GM10248 (cell line): ENCODE measurements at regions of chr2 and their contacts with region 1.

Region 1: DNA sequence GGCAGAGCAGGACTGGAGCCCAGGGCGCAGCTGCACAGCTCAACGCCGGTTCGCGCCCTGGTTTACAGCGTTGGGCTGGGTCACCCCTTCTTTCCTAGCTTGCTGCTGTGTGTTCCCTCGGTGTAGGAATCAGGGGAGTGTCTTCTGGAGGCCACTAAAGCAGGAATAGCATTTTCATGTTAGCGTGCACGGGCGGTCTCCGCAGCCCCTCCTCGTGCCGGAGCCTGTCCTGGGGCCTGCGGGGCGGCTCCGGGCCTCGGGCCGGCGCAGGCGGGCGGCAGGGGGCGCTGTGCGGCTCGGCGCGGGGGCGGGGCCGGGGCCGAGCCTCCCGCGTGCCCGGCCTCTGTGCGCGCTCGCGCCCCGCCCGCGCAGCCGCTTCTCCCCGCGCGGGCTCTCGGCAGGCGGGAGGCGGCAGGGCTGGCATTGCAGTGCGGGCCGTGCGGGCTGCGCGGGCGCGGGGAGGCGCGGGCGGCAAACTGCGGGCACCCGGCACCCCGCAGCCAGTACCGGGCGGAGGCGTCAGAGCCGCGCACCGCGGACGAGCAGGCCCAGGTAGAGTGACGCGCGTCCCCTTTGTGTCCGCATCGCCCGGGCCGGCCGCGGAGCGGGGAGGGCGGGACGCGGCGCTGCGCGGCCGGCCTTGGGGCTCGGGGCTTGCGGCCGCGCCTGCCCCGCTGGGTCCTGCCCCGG is at the start of gene RNF144A:
- DNase-seq: peak; percentile 88
- CTCF ChIP-seq: peak; percentile 73

Region 2: DNA sequence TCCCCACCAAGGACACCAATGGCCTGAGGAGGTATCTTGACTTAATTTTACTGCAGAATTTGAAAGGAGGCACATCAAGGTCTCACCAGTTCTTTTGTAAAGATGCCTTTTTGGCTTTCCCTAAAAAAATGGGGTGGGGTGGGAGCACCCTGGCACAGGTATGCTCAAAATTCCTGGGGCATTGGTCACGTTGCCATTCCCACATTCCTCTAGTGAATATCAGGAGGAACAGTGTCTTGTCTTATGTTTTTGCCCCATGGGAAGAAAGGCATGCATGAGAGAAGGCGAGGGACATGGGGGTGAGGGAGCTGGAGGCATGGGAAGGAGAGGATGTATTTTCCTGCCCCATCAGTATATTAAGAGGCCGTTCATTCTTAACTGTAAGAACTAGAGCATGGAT is 326.8 kb before region 1 on chr2:
- CTCF ChIA-PET with region 1: no interaction called
- POLR2A ChIA-PET with region 1: no interaction called
- DNase-seq: no peak
- CTCF ChIP-seq: no peak

Region 3: GRCh38 chr2:6854416-6854815 is 62.8 kb before region 1 on chr2:
- CTCF ChIA-PET with region 1: no interaction called
- POLR2A ChIA-PET with region 1: no interaction called
- DNase-seq: no peak
- CTCF ChIP-seq: no peak

Region 4: DNA sequence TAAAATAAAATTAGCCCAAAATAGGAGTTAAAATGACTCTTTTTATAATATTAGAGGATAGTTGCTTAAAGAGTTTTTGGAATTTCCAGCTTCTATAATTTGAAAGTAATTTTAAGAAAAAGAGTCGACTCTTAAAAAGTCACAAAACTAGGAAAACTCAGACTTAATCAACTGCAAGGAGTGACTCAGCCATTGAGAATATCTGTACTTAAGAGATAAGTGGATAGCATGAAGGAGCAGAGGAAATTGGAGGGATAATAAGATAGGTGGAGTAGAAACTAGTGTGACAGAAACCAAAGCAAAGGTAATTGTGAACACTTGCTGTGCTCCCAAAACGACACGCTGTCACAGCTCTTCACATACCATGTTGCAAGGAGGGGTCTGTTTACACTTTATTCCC is 31.2 kb before region 1 on chr2:
- CTCF ChIA-PET with region 1: no interaction called
- POLR2A ChIA-PET with region 1: no interaction called
- DNase-seq: no peak
- CTCF ChIP-seq: no peak

Region 5: GRCh38 chr2:6896930-6897759 is 20.1 kb before region 1 on chr2:
- CTCF ChIA-PET with region 1: interaction called, 123 read pairs
- POLR2A ChIA-PET with region 1: no interaction called
- DNase-seq: peak; percentile 31
- CTCF ChIP-seq: peak; percentile 65

Region 6: GRCh38 chr2:6929196-6929819 is 12.1 kb after region 1 on chr2:
- CTCF ChIA-PET with region 1: interaction called, 17 read pairs
- POLR2A ChIA-PET with region 1: no interaction called
- DNase-seq: no peak
- CTCF ChIP-seq: no peak

Region 7: GRCh38 chr2:6945087-6945813 is 28.0 kb after region 1 on chr2:
- CTCF ChIA-PET with region 1: interaction called, 12 read pairs
- POLR2A ChIA-PET with region 1: no interaction called
- DNase-seq: peak; percentile 66
- CTCF ChIP-seq: no peak

Region 8: GRCh38 chr2:6999211-6999877 is 82.1 kb after region 1 on chr2:
- CTCF ChIA-PET with region 1: interaction called, 10 read pairs
- POLR2A ChIA-PET with region 1: no interaction called
- DNase-seq: peak; percentile 60
- CTCF ChIP-seq: no peak

Region 9: GRCh38 chr2:7071916-7072556 is 154.8 kb after region 1 on chr2:
- CTCF ChIA-PET with region 1: no interaction called
- POLR2A ChIA-PET with region 1: no interaction called
- DNase-seq: no peak
- CTCF ChIP-seq: no peak